ENCODE measurements at regions of chr17 and their contacts with region 1.

Region 1: DNA sequence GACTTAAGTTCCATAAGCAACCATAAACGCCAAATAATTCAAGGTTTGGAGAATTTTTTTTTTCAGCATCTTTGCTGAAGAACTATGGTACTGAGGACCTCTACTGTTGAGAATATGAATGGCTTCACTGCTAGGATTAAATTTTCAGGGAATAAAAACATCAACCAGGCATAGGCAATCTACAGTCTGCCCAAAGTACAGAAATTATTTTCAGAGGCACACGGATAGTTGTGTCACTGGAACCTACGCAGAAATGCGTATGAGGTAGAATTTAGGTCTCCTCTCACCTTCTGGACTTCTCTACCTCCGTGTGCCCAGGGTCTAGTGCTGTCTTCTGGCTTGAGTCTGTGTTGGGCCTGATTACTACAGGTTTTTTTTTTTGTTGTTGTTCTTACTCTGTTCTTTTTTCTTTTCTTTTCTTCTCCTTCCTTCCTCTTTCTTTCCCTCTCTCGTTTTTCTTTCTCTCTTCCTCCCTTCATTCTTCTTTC is 39.7 kb downstream of the NACA2 start:
- DNase-seq: peak in 1 of 2 donors; percentile 71
- H3K4me3 ChIP-seq: no peak overlapping the region
- H3K27ac ChIP-seq: no peak overlapping the region
- H3K4me1 ChIP-seq: no peaks in the 10 kb centered on the region
- H3K27me3 ChIP-seq: peaks cover 0 to 50% (median 0%) of the 10 kb centered on the region in 3 donors
- CTCF ChIP-seq: peak in 5 of 7 experiments; percentile 47 to 63 (median 52)
- EP300 ChIP-seq: no peak
- POLR2A ChIP-seq: no peak

Region 2: DNA sequence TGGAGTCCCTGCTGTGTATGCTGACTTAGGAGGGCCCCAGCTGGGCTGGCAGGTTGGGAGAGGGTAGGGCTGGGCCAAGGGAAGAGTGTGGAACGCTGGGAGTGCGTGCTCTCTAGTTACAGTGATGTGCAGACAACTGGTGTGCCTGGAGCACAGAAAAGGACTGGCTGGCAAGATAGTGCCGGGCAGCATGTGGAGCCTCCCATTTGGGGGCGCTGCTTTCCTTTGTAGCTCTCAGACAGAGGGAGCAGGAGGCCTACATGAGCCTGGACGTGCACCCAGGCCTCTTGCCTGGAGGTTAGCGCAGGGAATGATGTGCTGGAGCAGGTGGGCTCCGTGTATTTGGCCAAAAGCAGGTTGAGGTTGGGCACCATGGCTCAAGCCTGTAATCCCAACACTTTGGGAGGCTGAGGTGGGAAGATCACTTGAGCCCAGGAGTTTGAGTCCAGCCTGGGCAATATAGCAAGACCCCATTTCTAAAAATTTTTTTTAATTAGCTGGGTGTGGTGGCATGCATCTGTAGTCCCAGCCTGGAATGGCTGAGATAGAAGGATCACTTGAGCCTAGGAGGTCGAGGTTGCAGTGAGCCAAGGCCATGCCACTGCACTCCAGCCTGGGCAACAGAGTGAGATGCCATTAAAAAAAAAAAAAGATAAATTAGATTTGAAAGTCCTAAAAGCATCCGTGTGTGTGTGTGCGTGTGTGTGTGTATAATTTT is 125.1 kb before region 1 on chr17:
- intact Hi-C with region 1: loop called (anchors 10 kb)
- DNase-seq: no peak
- H3K4me3 ChIP-seq: no peak overlapping the region
- H3K27ac ChIP-seq: no peak overlapping the region
- H3K4me1 ChIP-seq: no peaks in the 10 kb centered on the region
- H3K27me3 ChIP-seq: peaks cover 0 to 54% (median 39%) of the 10 kb centered on the region in 3 donors
- CTCF ChIP-seq: no peak
- EP300 ChIP-seq: no peak
- POLR2A ChIP-seq: no peak

Region 3: DNA sequence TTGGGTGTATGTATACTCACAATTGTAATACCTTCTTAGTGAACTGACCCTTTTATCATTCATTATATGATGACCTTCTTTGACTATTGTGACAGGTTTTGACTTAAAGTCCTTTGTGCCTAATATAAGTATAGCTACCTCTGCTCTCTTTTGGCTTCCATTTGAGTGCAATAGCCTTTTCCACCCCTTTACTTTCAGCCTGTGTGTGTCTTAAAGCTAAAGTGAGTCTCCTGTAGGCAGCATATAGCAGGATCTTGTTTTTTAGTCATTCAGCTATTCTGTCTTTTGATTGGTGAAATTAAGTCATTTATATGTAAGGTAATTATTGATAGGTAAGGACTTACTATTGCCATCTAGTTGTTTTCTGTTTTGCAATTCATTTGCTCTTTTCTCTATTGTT is 115.0 kb before region 1 on chr17:
- intact Hi-C with region 1: no loop called
- DNase-seq: no peak
- H3K4me3 ChIP-seq: no peak overlapping the region
- H3K27ac ChIP-seq: no peak overlapping the region
- H3K4me1 ChIP-seq: no peaks in the 10 kb centered on the region
- H3K27me3 ChIP-seq: peaks cover 0 to 24% (median 0%) of the 10 kb centered on the region in 3 donors
- CTCF ChIP-seq: no peak
- EP300 ChIP-seq: no peak
- POLR2A ChIP-seq: no peak